ENCODE measurements at regions of chr2 and their contacts with region 1.

Region 1: DNA sequence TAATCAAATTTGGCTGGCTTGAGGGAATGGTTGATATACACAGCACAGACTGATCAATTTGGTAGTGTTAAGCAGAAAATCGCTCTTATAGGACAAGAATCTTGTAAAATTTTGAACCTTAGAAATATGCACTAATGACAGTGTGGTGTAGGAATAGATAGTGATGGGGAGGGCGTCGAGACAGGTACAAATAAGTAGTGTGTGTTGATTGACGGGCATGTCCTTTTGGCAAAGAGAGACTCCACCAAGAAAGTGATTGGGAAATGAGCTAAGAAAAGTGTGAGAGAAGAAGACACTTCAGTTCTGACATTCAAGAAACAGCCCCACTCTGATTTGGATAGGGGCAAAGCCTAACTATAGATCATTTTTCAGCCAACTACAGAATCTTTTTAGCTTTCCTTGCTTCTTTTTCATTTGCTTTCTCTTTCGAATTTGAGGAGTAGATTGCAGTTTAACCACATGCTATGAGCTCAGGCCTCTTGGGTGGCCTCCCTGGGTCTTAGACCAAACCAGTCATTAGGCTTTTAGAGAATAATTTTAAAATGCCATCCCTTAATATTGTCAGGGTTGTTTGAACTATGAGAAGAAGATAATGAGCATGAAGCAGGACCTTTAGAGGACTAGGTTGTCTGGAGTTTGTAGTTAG is 127.1 kb downstream of the CERS6 start:
- DNase-seq: no peak
- ATAC-seq: peak; percentile 50
- H3K4me3 ChIP-seq: no peak overlapping the region
- H3K4me3 Mint-ChIP-seq: peak overlapping the region; percentile 11 to 74 (median 48)
- H3K27ac ChIP-seq: no peak overlapping the region
- H3K27ac Mint-ChIP-seq: peak overlapping the region; percentile 9 to 93 (median 63)
- H3K4me1 ChIP-seq: peaks cover 0 to 26% of the 10 kb centered on the region in 2 donors
- H3K4me1 Mint-ChIP-seq: peaks cover 38 to 80% (median 69%) of the 10 kb centered on the region in 7 donors
- H3K27me3 ChIP-seq: no peaks in the 10 kb centered on the region
- H3K27me3 Mint-ChIP-seq: no peaks in the 10 kb centered on the region

Region 2: GRCh38 chr2:168543037-168543436 is 40.1 kb before region 1 on chr2:
- CTCF ChIA-PET with region 1: no interaction called
- POLR2A ChIA-PET with region 1: no interaction called
- intact Hi-C with region 1: loop called in 1 of 2 experiments (anchors 5 kb)
- DNase-seq: peak in 7 of 9 donors; percentile 15 to 68 (median 40)
- ATAC-seq: peak; percentile 71
- H3K4me3 ChIP-seq: no peak overlapping the region
- H3K4me3 Mint-ChIP-seq: peak overlapping the region in 8 of 10 donors; percentile 9 to 81 (median 60)
- H3K27ac ChIP-seq: no peak overlapping the region
- H3K27ac Mint-ChIP-seq: peak overlapping the region in 5 of 9 donors; percentile 30 to 80 (median 41)
- H3K4me1 ChIP-seq: peaks cover 0 to 23% of the 10 kb centered on the region in 2 donors
- H3K4me1 Mint-ChIP-seq: peaks cover 13 to 74% (median 62%) of the 10 kb centered on the region in 7 donors
- H3K27me3 ChIP-seq: no peaks in the 10 kb centered on the region
- H3K27me3 Mint-ChIP-seq: no peaks in the 10 kb centered on the region

Region 3: DNA sequence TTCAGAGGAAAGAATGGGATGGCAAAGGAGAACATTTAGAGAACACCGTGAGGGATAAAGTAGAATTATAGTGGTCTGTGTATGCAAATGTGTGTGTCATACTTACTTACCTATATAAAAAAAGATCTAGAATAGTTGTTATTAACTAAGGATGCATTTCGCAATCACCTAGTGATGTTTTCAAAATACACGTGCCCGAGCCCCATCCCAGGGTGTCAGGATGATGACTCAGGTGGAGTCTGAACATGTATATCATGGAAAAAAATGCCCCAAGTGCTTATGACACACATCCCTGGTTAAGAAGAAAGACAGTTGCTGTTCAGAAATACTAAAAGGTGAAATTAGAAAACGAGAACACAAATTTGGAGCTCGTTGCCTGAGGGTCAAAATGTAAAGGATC is 18.1 kb before region 1 on chr2:
- CTCF ChIA-PET with region 1: no interaction called
- POLR2A ChIA-PET with region 1: no interaction called
- intact Hi-C with region 1: no loop called
- DNase-seq: no peak
- ATAC-seq: no peak
- H3K4me3 ChIP-seq: no peak overlapping the region
- H3K4me3 Mint-ChIP-seq: peak overlapping the region in 1 of 10 donors; percentile 15
- H3K27ac ChIP-seq: no peak overlapping the region
- H3K27ac Mint-ChIP-seq: peak overlapping the region in 2 of 9 donors; percentile 7 to 33
- H3K4me1 ChIP-seq: peaks cover 0 to 10% of the 10 kb centered on the region in 2 donors
- H3K4me1 Mint-ChIP-seq: peaks cover 13 to 78% (median 57%) of the 10 kb centered on the region in 7 donors
- H3K27me3 ChIP-seq: no peaks in the 10 kb centered on the region
- H3K27me3 Mint-ChIP-seq: no peaks in the 10 kb centered on the region

Region 4: GRCh38 chr2:168594778-168595177 is 11.6 kb after region 1 on chr2:
- CTCF ChIA-PET with region 1: no interaction called
- POLR2A ChIA-PET with region 1: no interaction called
- intact Hi-C with region 1: loop called in 1 of 2 experiments (anchors 1 kb)
- DNase-seq: no peak
- ATAC-seq: no peak
- H3K4me3 ChIP-seq: no peak overlapping the region
- H3K4me3 Mint-ChIP-seq: peak overlapping the region in 6 of 10 donors; percentile 8 to 56 (median 36)
- H3K27ac ChIP-seq: no peak overlapping the region
- H3K27ac Mint-ChIP-seq: peak overlapping the region in 3 of 9 donors; percentile 8 to 63 (median 13)
- H3K4me1 ChIP-seq: peaks cover 0 to 14% of the 10 kb centered on the region in 2 donors
- H3K4me1 Mint-ChIP-seq: peaks cover 12 to 71% (median 50%) of the 10 kb centered on the region in 7 donors
- H3K27me3 ChIP-seq: no peaks in the 10 kb centered on the region
- H3K27me3 Mint-ChIP-seq: no peaks in the 10 kb centered on the region

Region 5: DNA sequence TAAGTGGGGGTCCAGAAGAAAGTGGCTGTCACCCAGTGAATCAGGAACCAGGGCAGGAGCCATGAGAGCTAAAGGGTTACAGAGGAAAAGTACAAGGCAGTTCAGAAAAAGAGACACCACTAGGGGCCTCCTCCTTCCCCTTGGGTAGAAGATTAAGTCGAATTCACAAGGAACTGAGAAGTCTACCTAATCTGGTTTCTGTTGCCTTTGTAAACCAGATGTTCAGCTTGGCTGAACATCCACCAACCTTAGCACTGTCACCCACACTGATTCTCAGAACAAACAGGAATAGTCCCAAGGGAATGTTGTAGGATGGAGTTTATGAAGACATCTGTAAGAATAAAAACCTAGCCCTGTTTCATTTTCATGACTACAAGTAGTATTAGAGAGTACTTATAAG is 128.9 kb after region 1 on chr2:
- CTCF ChIA-PET with region 1: no interaction called
- POLR2A ChIA-PET with region 1: no interaction called
- intact Hi-C with region 1: no loop called
- DNase-seq: no peak
- ATAC-seq: peak; percentile 29
- H3K4me3 ChIP-seq: no peak overlapping the region
- H3K4me3 Mint-ChIP-seq: no peak overlapping the region
- H3K27ac ChIP-seq: no peak overlapping the region
- H3K27ac Mint-ChIP-seq: peak overlapping the region in 2 of 9 donors; percentile 52 to 61
- H3K4me1 ChIP-seq: no peaks in the 10 kb centered on the region
- H3K4me1 Mint-ChIP-seq: peaks cover under 1 to 28% (median 17%) of the 10 kb centered on the region in 7 donors
- H3K27me3 ChIP-seq: no peaks in the 10 kb centered on the region
- H3K27me3 Mint-ChIP-seq: no peaks in the 10 kb centered on the region

Measured in naive thymus-derived CD4-positive, alpha-beta T cell (primary cell).